Calu3 (cell line): ENCODE measurements at regions of chr7 and their contacts with region 1.

Region 1: GRCh38 chr7:32164346-32164957 is 94.2 kb upstream of the PDE1C start:
- DNase-seq: peak; percentile 79
- H3K4me3 Mint-ChIP-seq: no peak overlapping the region
- H3K27ac Mint-ChIP-seq: peak overlapping the region; percentile 62
- H3K4me1 Mint-ChIP-seq: peaks cover 36% of the 10 kb centered on the region
- H3K27me3 Mint-ChIP-seq: no peaks in the 10 kb centered on the region
- CTCF ChIP-seq: peak; percentile 92

Region 2: DNA sequence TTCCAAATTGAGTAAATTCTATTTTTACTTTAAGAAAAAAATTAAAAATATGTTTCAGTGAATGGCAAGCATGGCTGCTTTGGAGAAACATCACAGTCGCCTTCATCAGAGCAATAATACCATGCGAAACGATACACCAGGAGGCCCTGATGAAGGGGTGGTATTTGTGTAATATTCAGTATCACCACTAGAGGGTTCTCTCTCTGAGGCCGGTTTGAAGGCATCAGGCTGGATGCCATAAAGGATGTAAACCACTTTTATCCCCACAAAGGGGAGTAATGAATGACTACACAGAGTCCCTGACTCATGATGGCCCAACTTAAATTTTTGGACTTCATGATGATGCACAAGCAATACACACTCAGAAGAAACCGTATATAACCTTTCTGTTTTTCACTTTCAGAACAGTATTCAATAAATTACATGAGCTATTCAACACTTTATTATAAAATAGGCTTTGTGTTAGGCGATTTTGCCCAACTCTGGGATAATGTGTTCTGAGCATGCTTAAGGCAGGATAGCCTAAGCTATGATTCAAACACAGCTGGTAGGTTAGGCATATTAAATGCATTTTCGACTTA is 382.0 kb before region 1 on chr7:
- CTCF ChIA-PET with region 1: interaction called, 8 read pairs
- intact Hi-C with region 1: loop called (anchors 1 kb)
- DNase-seq: peak; percentile 57
- H3K4me3 Mint-ChIP-seq: no peak overlapping the region
- H3K27ac Mint-ChIP-seq: no peak overlapping the region
- H3K4me1 Mint-ChIP-seq: peaks cover 6% of the 10 kb centered on the region
- H3K27me3 Mint-ChIP-seq: no peaks in the 10 kb centered on the region
- CTCF ChIP-seq: peak; percentile 92

Region 3: DNA sequence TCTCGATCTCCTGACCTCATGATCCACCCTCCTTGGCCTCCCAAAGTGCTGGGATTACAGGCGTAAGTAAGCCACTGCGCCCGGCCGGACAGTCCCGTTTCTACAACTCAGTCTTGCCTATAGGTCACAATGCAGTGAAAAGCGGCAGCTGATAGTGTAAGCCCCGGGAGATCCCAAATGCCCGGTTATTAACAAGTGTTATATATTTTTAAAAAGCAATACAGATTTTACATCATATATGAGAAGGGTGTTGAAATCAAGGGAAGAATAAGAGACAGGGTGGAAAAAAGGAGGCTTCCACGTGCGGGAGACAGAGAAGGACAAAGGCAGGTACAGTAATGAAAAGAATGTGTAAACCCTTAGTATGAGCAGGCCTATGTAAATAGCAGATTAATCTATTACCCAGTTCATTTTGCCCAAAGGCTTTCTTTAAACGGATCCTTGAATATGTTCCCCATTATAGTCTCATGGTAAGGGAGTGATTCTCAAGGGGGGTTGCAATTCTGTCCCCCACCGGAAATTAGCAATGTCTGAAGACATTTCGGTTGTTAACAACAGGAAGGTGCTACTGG is 265.0 kb before region 1 on chr7:
- CTCF ChIA-PET with region 1: no interaction called
- intact Hi-C with region 1: loop called (anchors 1 kb)
- DNase-seq: peak; percentile 45
- H3K4me3 Mint-ChIP-seq: peak overlapping the region; percentile 69
- H3K27ac Mint-ChIP-seq: peak overlapping the region; percentile 88
- H3K4me1 Mint-ChIP-seq: peaks cover 28% of the 10 kb centered on the region
- H3K27me3 Mint-ChIP-seq: no peaks in the 10 kb centered on the region
- CTCF ChIP-seq: no peak

Region 4: GRCh38 chr7:32043714-32044113 is 120.7 kb before region 1 on chr7:
- CTCF ChIA-PET with region 1: interaction called, 8 read pairs
- intact Hi-C with region 1: loop called (anchors 2 kb)
- DNase-seq: peak; percentile 47
- H3K4me3 Mint-ChIP-seq: no peak overlapping the region
- H3K27ac Mint-ChIP-seq: peak overlapping the region; percentile 37
- H3K4me1 Mint-ChIP-seq: peaks cover 65% of the 10 kb centered on the region
- H3K27me3 Mint-ChIP-seq: no peaks in the 10 kb centered on the region
- CTCF ChIP-seq: no peak